ENCODE measurements at regions of chr15 and their contacts with region 1.

Region 1: GRCh38 chr15:28873541-28874190 is 12.1 kb upstream of the APBA2 start:
- DNase-seq: peak; percentile 51
- H3K4me3 ChIP-seq: no peak overlapping the region
- H3K27ac ChIP-seq: no peak overlapping the region; a peak in 1 of 4 replicates
- H3K4me1 ChIP-seq: peaks cover 0 to 9% of the 10 kb centered on the region in 2 experiments; a peak in 1 of 4 replicates
- H3K27me3 ChIP-seq: no peaks in the 10 kb centered on the region
- CTCF ChIP-seq: no peak
- EP300 ChIP-seq: no peak
- RAD21 ChIP-seq: peak; percentile 66

Region 2: GRCh38 chr15:28975766-28976179 is 102.1 kb after region 1 on chr15:
- CTCF ChIA-PET with region 1: interaction called, 25 read pairs
- POLR2A ChIA-PET with region 1: no interaction called
- DNase-seq: peak; percentile 77
- H3K4me3 ChIP-seq: no peak overlapping the region; a peak in 1 of 4 replicates
- H3K27ac ChIP-seq: no peak overlapping the region
- H3K4me1 ChIP-seq: peaks cover 5 to 20% of the 10 kb centered on the region in 2 experiments; a peak in 2 of 4 replicates
- H3K27me3 ChIP-seq: no peaks in the 10 kb centered on the region
- CTCF ChIP-seq: peak; percentile 74
- EP300 ChIP-seq: no peak
- RAD21 ChIP-seq: peak; percentile 87

Region 3: GRCh38 chr15:29070449-29071231 is 197.0 kb after region 1 on chr15:
- CTCF ChIA-PET with region 1: no interaction called
- POLR2A ChIA-PET with region 1: no interaction called
- DNase-seq: no peak
- H3K4me3 ChIP-seq: no peak overlapping the region
- H3K27ac ChIP-seq: no peak overlapping the region; a peak in 1 of 4 replicates
- H3K4me1 ChIP-seq: peaks cover 0 to 18% of the 10 kb centered on the region in 2 experiments; a peak in 1 of 4 replicates
- H3K27me3 ChIP-seq: no peaks in the 10 kb centered on the region
- CTCF ChIP-seq: no peak
- EP300 ChIP-seq: no peak
- RAD21 ChIP-seq: no peak

Measured in SK-N-SH (cell line).